Stomach (tissue), 19 donors: ENCODE measurements at regions of chr1 and their contacts with region 1.

Region 1: GRCh38 chr1:224922404-224923164 is 6.9 kb upstream of the DNAH14 start:
- DNase-seq: peak; percentile 34 to 73
- H3K4me3 ChIP-seq: no peak overlapping the region
- H3K27ac ChIP-seq: no peak overlapping the region
- H3K4me1 ChIP-seq: peaks cover 0 to 18% (median 0%) of the 10 kb centered on the region in 4 donors
- H3K27me3 ChIP-seq: no peaks in the 10 kb centered on the region
- CTCF ChIP-seq: peak in 5 of 7 experiments; percentile 32 to 82 (median 59)
- EP300 ChIP-seq: no peak
- POLR2A ChIP-seq: no peak

Region 2: GRCh38 chr1:224447251-224447650 is 475.3 kb before region 1 on chr1:
- intact Hi-C with region 1: no loop called
- DNase-seq: no peak
- H3K4me3 ChIP-seq: no peak overlapping the region
- H3K27ac ChIP-seq: peak overlapping the region in 1 of 5 donors; percentile 5
- H3K4me1 ChIP-seq: peaks cover 0 to 10% (median 3%) of the 10 kb centered on the region in 4 donors
- H3K27me3 ChIP-seq: no peaks in the 10 kb centered on the region
- CTCF ChIP-seq: no peak
- EP300 ChIP-seq: no peak
- POLR2A ChIP-seq: no peak

Region 3: GRCh38 chr1:224513787-224514209 is 408.8 kb before region 1 on chr1:
- intact Hi-C with region 1: loop called (anchors 5 kb)
- DNase-seq: peak; percentile 90 to 92
- H3K4me3 ChIP-seq: no peak overlapping the region
- H3K27ac ChIP-seq: no peak overlapping the region
- H3K4me1 ChIP-seq: peaks cover 0 to 25% (median 12%) of the 10 kb centered on the region in 4 donors
- H3K27me3 ChIP-seq: no peaks in the 10 kb centered on the region
- CTCF ChIP-seq: peak in 5 of 7 experiments; percentile 71 to 96 (median 89)
- EP300 ChIP-seq: no peak
- POLR2A ChIP-seq: no peak

Region 4: DNA sequence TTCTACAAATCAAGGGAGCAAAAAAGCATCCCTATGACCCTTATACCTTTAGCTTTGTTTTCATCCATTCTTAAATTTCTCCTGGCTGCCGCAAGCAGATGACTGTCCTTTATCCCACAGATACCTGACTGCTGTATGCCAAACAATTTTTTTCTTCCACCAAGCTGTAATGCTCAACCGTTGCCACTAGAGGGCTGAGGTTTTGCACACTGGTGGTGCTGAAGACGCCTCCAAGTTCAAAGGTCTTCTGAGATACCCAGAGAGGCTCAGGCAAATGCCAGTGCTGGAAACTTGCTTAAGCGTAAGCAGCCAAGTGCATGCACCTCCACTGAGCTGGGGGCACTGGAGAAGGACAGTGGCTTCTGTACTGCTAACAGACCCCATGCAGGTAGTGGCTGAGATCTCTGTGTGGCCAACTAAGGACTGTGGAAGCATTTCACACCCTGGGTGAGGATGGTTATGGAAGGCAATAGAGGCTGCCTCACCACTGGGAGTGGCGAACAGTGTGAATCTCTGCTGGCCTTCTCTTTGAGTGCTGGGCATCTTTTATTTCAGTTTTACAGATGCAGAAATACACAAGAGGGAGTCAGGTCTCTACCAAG is 277.9 kb before region 1 on chr1:
- intact Hi-C with region 1: loop called (anchors 10 kb)
- DNase-seq: peak; percentile 39 to 74
- H3K4me3 ChIP-seq: no peak overlapping the region
- H3K27ac ChIP-seq: no peak overlapping the region
- H3K4me1 ChIP-seq: peaks cover 3 to 14% (median 8%) of the 10 kb centered on the region in 4 donors
- H3K27me3 ChIP-seq: no peaks in the 10 kb centered on the region
- CTCF ChIP-seq: peak in 5 of 7 experiments; percentile 55 to 89 (median 84)
- EP300 ChIP-seq: no peak
- POLR2A ChIP-seq: no peak

Region 5: GRCh38 chr1:224903951-224904350 is 18.6 kb before region 1 on chr1:
- intact Hi-C with region 1: no loop called
- DNase-seq: no peak
- H3K4me3 ChIP-seq: no peak overlapping the region
- H3K27ac ChIP-seq: no peak overlapping the region
- H3K4me1 ChIP-seq: no peaks in the 10 kb centered on the region
- H3K27me3 ChIP-seq: peaks cover 0 to 5% (median 0%) of the 10 kb centered on the region in 3 donors
- CTCF ChIP-seq: no peak
- EP300 ChIP-seq: no peak
- POLR2A ChIP-seq: no peak